ENCODE measurements at regions of chr1 and their contacts with region 1.

Region 1: GRCh38 chr1:52904927-52905698 is 16.4 kb downstream of the ECHDC2 start:
- DNase-seq: peak in 1 of 2 experiments; percentile 47
- H3K4me3 ChIP-seq: no peak overlapping the region
- H3K4me3 Mint-ChIP-seq: no peak overlapping the region
- H3K27ac Mint-ChIP-seq: peak overlapping the region; percentile 77
- H3K4me1 ChIP-seq: peaks cover 20% of the 10 kb centered on the region
- H3K4me1 Mint-ChIP-seq: peaks cover 8% of the 10 kb centered on the region
- H3K27me3 ChIP-seq: no peaks in the 10 kb centered on the region
- H3K27me3 Mint-ChIP-seq: no peaks in the 10 kb centered on the region
- CTCF ChIP-seq: peak; percentile 37 to 38

Region 2: GRCh38 chr1:52867087-52867863 is 37.8 kb before region 1 on chr1:
- CTCF ChIA-PET with region 1: no interaction called
- POLR2A ChIA-PET with region 1: no interaction called
- intact Hi-C with region 1: no loop called
- DNase-seq: peak; percentile 36 to 43
- H3K4me3 ChIP-seq: no peak overlapping the region
- H3K4me3 Mint-ChIP-seq: no peak overlapping the region
- H3K27ac Mint-ChIP-seq: peak overlapping the region; percentile 61
- H3K4me1 ChIP-seq: peaks cover 20% of the 10 kb centered on the region
- H3K4me1 Mint-ChIP-seq: peaks cover 6% of the 10 kb centered on the region
- H3K27me3 ChIP-seq: no peaks in the 10 kb centered on the region
- H3K27me3 Mint-ChIP-seq: no peaks in the 10 kb centered on the region
- CTCF ChIP-seq: no peak

Region 3: GRCh38 chr1:52920791-52921291 is 15.7 kb after region 1 on chr1:
- CTCF ChIA-PET with region 1: interaction called, 15 read pairs
- POLR2A ChIA-PET with region 1: no interaction called
- intact Hi-C with region 1: no loop called
- DNase-seq: no peak
- H3K4me3 ChIP-seq: peak overlapping the region; percentile 50
- H3K4me3 Mint-ChIP-seq: peak overlapping the region; percentile 70
- H3K27ac Mint-ChIP-seq: no peak overlapping the region
- H3K4me1 ChIP-seq: no peaks in the 10 kb centered on the region
- H3K4me1 Mint-ChIP-seq: no peaks in the 10 kb centered on the region
- H3K27me3 ChIP-seq: no peaks in the 10 kb centered on the region
- H3K27me3 Mint-ChIP-seq: no peaks in the 10 kb centered on the region
- CTCF ChIP-seq: no peak

Region 4: GRCh38 chr1:53176452-53177208 is 271.5 kb after region 1 on chr1:
- CTCF ChIA-PET with region 1: no interaction called
- POLR2A ChIA-PET with region 1: no interaction called
- intact Hi-C with region 1: loop called (anchors 5 kb)
- DNase-seq: peak in 1 of 2 experiments; percentile 36
- H3K4me3 ChIP-seq: no peak overlapping the region
- H3K4me3 Mint-ChIP-seq: no peak overlapping the region
- H3K27ac Mint-ChIP-seq: no peak overlapping the region
- H3K4me1 ChIP-seq: 0 out of 2 replicates have a peak, but pooled peaks cover 4% of the 10 kb centered on the region
- H3K4me1 Mint-ChIP-seq: peaks cover 18% of the 10 kb centered on the region
- H3K27me3 ChIP-seq: no peaks in the 10 kb centered on the region
- H3K27me3 Mint-ChIP-seq: no peaks in the 10 kb centered on the region
- CTCF ChIP-seq: peak in 1 of 2 experiments; percentile 36